ENCODE measurements at regions of chr4 and their contacts with region 1.

Region 1: GRCh38 chr4:705278-706082 is at the start of gene PCGF3:
- DNase-seq: peak; percentile 92 to 97 (median 95)
- ATAC-seq: peak; percentile 98
- H3K4me3 ChIP-seq: peak within 1 kb of the TSS; percentile 75 to 89
- H3K4me3 Mint-ChIP-seq: peak within 1 kb of the TSS; percentile 82
- H3K27ac ChIP-seq: peak within 1 kb of the TSS; percentile 68 to 75
- H3K27ac Mint-ChIP-seq: peak within 1 kb of the TSS; percentile 60
- H3K4me1 ChIP-seq: peaks cover 24% of the 10 kb centered on the region
- H3K4me1 Mint-ChIP-seq: peaks cover 28% of the 10 kb centered on the region
- H3K27me3 ChIP-seq: no peaks in the 10 kb centered on the region
- H3K27me3 Mint-ChIP-seq: no peaks in the 10 kb centered on the region
- CTCF ChIP-seq: no peak
- total RNA-seq, gene PCGF3: 39.1 to 39.5 TPM

Region 2: DNA sequence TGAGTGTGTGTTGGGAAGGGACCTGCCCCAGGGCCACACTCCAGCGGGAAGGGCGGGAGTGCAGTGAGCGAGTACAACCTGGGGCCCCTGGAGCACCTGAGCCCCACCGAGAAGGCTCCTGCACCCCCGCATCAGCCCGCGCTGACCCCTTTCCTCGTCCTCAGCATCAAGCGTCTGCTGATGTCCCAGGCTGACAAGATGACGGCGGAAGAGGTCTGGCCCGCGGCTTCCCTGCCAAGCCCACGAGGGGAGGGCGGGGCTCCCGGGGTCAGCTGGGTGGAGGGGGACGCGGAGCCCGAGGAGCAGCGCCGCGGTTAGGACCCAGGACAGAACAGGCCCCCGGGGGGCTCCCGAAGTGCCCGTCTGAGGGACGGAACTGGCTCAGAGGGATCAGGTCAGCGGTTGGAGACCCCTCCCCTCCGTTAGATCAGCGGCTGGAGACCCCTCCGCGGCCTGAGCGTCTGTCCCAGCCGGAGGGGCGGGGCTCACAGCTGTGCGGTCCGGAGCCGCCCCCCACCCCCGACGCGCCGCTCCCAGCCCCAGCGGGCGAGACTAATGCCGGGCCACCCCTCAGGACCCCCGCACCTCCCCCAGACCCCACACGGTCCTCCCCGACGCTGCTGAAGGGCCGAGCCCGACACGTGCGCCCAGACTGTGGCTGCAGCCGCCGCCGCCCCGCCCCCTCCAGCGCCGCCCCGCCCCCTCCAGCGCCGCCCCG is 24.4 kb before region 1 on chr4:
- CTCF ChIA-PET with region 1: no interaction called
- POLR2A ChIA-PET with region 1: no interaction called
- intact Hi-C with region 1: loop called (anchors 1 kb)
- DNase-seq: peak in 7 of 9 experiments; percentile 41 to 76 (median 55)
- ATAC-seq: peak; percentile 48
- H3K4me3 ChIP-seq: peak overlapping the region; percentile 54 to 56
- H3K4me3 Mint-ChIP-seq: peak overlapping the region; percentile 63
- H3K27ac ChIP-seq: peak overlapping the region in 1 of 2 experiments; percentile 69
- H3K27ac Mint-ChIP-seq: peak overlapping the region; percentile 27
- H3K4me1 ChIP-seq: peaks cover 9% of the 10 kb centered on the region
- H3K4me1 Mint-ChIP-seq: peaks cover 13% of the 10 kb centered on the region
- H3K27me3 ChIP-seq: no peaks in the 10 kb centered on the region
- H3K27me3 Mint-ChIP-seq: peaks cover 8% of the 10 kb centered on the region
- CTCF ChIP-seq: no peak

Region 3: GRCh38 chr4:732911-733630 is 27.6 kb after region 1 on chr4:
- CTCF ChIA-PET with region 1: no interaction called
- POLR2A ChIA-PET with region 1: no interaction called
- intact Hi-C with region 1: no loop called
- DNase-seq: no peak
- ATAC-seq: no peak
- H3K4me3 ChIP-seq: no peak overlapping the region
- H3K4me3 Mint-ChIP-seq: no peak overlapping the region
- H3K27ac ChIP-seq: no peak overlapping the region
- H3K27ac Mint-ChIP-seq: no peak overlapping the region
- H3K4me1 ChIP-seq: no peaks in the 10 kb centered on the region
- H3K4me1 Mint-ChIP-seq: no peaks in the 10 kb centered on the region
- H3K27me3 ChIP-seq: no peaks in the 10 kb centered on the region
- H3K27me3 Mint-ChIP-seq: no peaks in the 10 kb centered on the region
- CTCF ChIP-seq: no peak

Region 4: DNA sequence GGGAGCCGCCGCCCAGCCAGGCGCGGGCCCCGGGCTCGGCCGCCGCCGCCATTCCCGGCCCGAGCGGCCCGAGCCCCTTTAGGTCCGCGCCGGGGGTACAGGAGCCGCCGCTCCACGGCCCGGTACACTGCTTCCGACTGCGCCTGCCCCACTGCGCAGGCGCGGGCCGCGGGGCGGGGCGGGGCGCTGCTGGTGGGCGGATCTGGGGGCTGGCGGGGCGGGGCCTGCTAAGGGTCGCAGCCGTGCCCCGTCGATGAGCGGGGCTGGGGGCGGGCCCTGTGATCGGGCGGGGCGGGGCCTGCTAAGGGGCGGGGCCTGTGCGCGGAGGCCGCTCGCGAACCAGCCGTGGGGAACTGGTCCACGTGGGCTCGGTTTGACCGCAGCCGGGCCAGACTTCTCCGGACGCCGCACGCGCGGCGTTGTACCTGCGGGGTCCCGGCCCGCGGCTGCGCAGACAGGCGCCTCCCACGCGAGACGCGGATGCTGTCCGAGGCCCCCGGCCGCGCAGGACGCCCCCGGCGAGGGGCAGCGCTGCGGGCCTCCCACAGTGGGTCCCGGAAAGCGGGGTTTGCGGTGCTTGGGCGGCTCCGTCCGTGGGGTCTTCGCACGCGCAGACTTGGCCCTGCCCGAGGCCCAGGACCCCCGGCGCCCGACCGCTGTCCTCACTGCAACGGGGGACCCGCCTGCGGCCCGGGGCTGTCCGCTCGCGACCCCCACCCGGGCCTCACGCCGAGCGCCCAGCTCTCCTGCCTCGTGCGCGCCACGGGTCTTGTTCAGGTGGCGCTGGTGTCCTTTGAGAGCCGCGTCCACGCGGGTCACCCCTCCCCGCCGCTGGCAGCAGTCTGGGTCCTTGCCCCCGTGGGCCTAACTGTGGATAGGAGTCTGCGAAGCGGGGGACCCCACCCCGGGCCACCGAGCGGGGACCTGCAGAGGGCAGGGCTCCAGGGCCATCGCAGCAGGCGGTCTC is 268.2 kb after region 1 on chr4 and contains the start of gene DGKQ:
- CTCF ChIA-PET with region 1: no interaction called
- POLR2A ChIA-PET with region 1: no interaction called
- intact Hi-C with region 1: loop called in 1 of 2 experiments (anchors 1 kb)
- DNase-seq: peak; percentile 83 to 95 (median 89)
- ATAC-seq: peak; percentile 82
- H3K4me3 ChIP-seq: peak within 1 kb of the TSS; percentile 74 to 77
- H3K4me3 Mint-ChIP-seq: peak within 1 kb of the TSS; percentile 62
- H3K27ac ChIP-seq: peak within 1 kb of the TSS; percentile 56 to 85
- H3K27ac Mint-ChIP-seq: peak within 1 kb of the TSS; percentile 37
- H3K4me1 ChIP-seq: peaks cover 32% of the 10 kb centered on the region
- H3K4me1 Mint-ChIP-seq: peaks cover 17% of the 10 kb centered on the region
- H3K27me3 ChIP-seq: no peaks in the 10 kb centered on the region
- H3K27me3 Mint-ChIP-seq: no peaks in the 10 kb centered on the region
- CTCF ChIP-seq: no peak
- total RNA-seq, gene DGKQ: 28.2 to 29.7 TPM

Region 5: DNA sequence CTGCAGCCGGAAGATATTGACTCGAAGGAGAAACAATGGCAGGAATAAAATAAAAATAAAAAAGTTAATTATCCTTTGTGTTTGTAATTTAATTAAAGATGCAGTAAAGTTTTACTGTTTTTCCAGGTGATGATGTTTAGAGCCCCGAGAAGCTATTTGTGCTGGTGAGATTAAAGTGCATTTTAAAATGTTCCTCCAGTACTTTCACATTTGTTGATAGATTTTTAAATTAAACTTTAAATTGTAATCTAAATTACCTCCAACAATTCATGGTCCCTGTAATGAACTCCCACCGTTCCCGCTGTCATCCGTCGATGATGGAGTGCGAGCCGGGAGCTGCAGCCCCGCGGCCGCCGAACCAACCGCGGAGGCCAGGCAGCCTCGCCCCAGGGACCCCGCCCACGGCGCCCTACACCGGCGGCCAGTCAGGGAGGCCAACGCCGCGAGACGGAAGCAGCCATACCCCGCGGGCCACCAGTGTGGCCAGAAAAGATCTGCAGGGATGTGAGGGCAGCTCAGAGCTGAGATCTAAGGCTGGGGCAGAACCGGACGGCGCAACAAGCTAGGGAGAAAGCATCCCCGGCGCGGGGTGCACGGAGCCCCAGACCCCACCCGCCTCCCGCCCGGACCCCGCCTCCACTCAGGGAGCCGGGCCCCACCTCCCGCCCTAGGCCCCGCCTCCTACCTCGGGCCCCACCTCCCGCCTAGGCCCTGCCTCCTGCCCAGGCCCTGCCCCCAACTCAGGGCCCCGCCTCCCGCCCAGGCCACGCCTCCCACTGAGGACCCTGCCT is 874.6 kb after region 1 on chr4:
- CTCF ChIA-PET with region 1: no interaction called
- POLR2A ChIA-PET with region 1: no interaction called
- intact Hi-C with region 1: loop called in 1 of 2 experiments (anchors 2 kb)
- DNase-seq: peak; percentile 83 to 96 (median 93)
- ATAC-seq: peak; percentile 82
- H3K4me3 ChIP-seq: peak overlapping the region; percentile 70 to 78
- H3K4me3 Mint-ChIP-seq: peak overlapping the region; percentile 79
- H3K27ac ChIP-seq: peak overlapping the region; percentile 66 to 73
- H3K27ac Mint-ChIP-seq: peak overlapping the region; percentile 79
- H3K4me1 ChIP-seq: no peaks in the 10 kb centered on the region
- H3K4me1 Mint-ChIP-seq: peaks cover 11% of the 10 kb centered on the region
- H3K27me3 ChIP-seq: no peaks in the 10 kb centered on the region
- H3K27me3 Mint-ChIP-seq: no peaks in the 10 kb centered on the region
- CTCF ChIP-seq: no peak

Measured in CD8-positive, alpha-beta T cell (primary cell).